Thyroid gland (tissue), 4 donors: ENCODE measurements at regions of chr15 and their contacts with region 1.

Region 1: DNA sequence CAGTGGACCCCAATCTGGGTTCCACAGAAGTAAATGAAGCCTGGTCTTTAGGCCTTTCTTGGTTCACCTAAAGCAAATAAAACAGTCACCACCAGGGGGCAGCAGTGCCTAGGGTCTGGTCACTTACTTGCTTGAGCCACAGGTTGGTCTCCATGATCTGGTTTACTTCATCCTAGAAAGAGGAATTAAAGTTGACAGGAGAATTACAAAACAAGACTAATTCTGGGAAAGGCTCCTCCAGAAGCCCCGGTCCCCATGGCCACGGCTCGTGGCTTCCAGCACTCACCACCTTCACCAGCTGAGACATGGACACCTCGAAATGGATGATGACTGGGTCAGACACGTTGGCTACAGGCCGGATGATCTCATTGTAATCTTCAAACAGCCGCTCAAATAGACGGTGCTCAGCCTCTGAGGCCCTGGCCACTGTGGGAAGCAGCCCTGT is 2.3 kb downstream of the CHRNA3 start:
- DNase-seq: peak; percentile 88 to 91
- H3K4me3 ChIP-seq: no peak overlapping the region
- H3K27ac ChIP-seq: no peak overlapping the region
- H3K4me1 ChIP-seq: peaks cover 6 to 13% of the 10 kb centered on the region in 2 donors
- H3K27me3 ChIP-seq: peaks cover 9% of the 10 kb centered on the region
- CTCF ChIP-seq: peak; percentile 78 to 91 (median 80)
- POLR2A ChIP-seq: no peak

Region 2: DNA sequence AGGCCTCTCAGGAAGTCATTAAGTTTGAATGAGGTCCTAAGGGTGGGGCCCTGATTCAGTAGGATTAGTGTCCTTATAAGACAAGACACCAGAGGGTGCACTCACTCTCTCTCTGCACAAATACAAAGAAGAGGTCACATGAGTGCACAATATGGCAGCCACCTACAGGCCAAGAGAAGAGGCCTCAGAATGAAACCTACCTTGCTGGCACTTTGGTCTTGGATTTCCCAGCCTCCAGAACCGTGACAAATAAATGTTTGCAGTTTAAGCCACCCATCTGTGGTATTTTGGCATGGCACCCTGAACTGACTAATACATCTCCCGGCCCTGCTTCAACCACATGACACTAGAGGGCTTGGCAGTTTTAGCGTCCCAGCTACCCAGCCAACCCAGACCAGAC is 96.4 kb after region 1 on chr15:
- intact Hi-C with region 1: loop called (anchors 5 kb)
- DNase-seq: no peak
- H3K4me3 ChIP-seq: no peak overlapping the region
- H3K27ac ChIP-seq: no peak overlapping the region
- H3K4me1 ChIP-seq: no peaks in the 10 kb centered on the region
- H3K27me3 ChIP-seq: no peaks in the 10 kb centered on the region
- CTCF ChIP-seq: no peak
- POLR2A ChIP-seq: no peak